ENCODE measurements at regions of chr9 and their contacts with region 1.

Region 1: DNA sequence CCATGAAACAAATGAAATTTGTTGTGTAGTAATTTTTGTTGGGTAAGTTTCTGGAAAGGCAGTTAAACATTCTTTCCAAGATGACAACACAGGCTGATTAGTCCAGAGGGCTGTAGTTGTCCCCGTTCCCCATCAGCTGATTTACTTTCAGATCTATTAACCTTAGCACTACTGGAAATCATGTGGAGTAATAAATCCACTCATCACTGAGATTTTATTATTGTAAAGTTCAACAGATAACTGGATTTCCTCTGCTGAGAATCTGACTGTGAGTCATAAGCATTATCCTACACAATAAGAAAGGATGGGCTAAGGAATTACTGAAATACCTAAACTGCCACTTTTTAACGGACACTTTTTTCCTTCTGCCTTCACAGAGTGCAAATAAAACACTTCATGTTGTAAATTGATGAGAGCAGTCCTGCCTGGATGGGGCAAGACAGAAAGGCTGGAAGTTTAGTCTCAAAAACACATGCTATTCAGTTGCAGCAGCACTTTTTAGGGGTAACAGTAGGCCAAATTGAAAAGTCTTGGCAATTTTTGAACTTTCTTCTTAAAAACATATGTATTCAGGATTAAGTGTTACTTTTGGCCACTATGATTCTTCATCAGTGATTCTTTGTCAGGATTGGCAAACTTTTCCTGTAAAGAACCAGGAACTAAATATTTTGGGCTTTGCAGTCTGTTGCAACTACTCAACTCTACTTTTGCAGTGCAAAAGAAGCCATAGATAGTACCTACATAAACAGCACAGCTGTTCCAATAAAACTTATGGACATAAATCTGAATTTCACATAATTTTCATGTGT is 7.0 kb downstream of the STOM start:
- DNase-seq: no peak
- ATAC-seq: no peak
- H3K4me3 Mint-ChIP-seq: no peak overlapping the region
- H3K27ac Mint-ChIP-seq: no peak overlapping the region
- H3K4me1 Mint-ChIP-seq: peaks cover 74% of the 10 kb centered on the region
- H3K27me3 Mint-ChIP-seq: no peaks in the 10 kb centered on the region

Region 2: DNA sequence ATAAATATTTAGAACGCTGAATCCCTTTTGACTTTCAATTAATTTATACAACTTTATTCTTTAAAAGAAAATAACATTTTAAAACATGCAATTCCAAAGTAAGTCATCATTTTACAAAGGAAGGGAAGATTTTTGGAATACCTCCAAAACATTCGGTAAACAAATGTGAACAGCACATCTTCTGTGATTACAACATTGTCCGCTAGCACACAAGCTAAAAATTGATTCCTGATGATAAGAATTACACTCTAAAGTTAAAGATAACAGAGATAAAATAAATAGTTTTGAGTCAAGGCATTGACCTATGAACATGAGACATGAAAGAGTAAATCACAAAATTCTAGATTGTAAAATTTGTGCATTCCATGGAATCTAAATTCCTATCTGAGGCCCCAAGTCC is 380.2 kb before region 1 on chr9:
- CTCF ChIA-PET with region 1: no interaction called
- POLR2A ChIA-PET with region 1: no interaction called
- DNase-seq: no peak
- ATAC-seq: no peak
- H3K4me3 Mint-ChIP-seq: no peak overlapping the region
- H3K27ac Mint-ChIP-seq: no peak overlapping the region
- H3K4me1 Mint-ChIP-seq: no peaks in the 10 kb centered on the region
- H3K27me3 Mint-ChIP-seq: peaks cover 14% of the 10 kb centered on the region

Region 3: DNA sequence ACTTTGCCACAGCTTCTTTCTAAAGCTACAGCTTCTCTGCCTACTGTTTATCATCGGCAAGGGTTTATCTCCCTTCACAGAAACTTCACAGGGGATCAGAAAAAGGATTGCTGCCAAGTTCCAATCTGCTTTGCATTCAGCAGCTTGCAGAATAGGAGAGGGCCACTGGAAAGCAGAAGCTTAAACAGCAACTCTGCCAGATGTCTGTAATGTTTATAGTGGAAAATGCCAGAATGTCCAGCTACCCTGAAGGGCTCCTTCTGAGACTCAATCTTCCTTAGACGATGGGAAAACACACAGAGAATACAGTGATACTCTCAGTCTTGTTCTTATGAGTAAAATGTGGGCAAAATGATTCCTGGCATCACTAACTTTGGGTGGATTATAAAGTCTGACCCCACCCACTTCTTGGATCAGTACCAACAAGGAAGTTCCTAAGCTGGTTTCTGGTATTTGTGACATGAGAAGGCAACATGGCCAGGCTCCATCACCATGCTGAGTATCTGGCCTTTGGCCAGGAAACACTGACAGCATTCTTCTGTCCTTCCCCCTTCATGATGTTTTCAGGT is 11.9 kb before region 1 on chr9:
- CTCF ChIA-PET with region 1: interaction called, 11 read pairs
- POLR2A ChIA-PET with region 1: interaction called, 3 read pairs
- DNase-seq: peak; percentile 17
- ATAC-seq: no peak
- H3K4me3 Mint-ChIP-seq: no peak overlapping the region
- H3K27ac Mint-ChIP-seq: no peak overlapping the region
- H3K4me1 Mint-ChIP-seq: peaks cover 41% of the 10 kb centered on the region
- H3K27me3 Mint-ChIP-seq: no peaks in the 10 kb centered on the region